Spleen (tissue), 13 donors: ENCODE measurements at regions of chr6 and their contacts with region 1.

Region 1: GRCh38 chr6:106163446-106163965 is 77.4 kb downstream of the PRDM1 start:
- DNase-seq: peak; percentile 84
- H3K4me3 ChIP-seq: peak overlapping the region in 1 of 8 donors; percentile 50
- H3K27ac ChIP-seq: peak overlapping the region; percentile 69 to 96 (median 91)
- H3K4me1 ChIP-seq: peaks cover 15 to 31% (median 28%) of the 10 kb centered on the region in 6 donors
- H3K27me3 ChIP-seq: no peaks in the 10 kb centered on the region
- CTCF ChIP-seq: peak in 4 of 11 experiments; percentile 33 to 46 (median 38)
- POLR2A ChIP-seq: no peak

Region 2: DNA sequence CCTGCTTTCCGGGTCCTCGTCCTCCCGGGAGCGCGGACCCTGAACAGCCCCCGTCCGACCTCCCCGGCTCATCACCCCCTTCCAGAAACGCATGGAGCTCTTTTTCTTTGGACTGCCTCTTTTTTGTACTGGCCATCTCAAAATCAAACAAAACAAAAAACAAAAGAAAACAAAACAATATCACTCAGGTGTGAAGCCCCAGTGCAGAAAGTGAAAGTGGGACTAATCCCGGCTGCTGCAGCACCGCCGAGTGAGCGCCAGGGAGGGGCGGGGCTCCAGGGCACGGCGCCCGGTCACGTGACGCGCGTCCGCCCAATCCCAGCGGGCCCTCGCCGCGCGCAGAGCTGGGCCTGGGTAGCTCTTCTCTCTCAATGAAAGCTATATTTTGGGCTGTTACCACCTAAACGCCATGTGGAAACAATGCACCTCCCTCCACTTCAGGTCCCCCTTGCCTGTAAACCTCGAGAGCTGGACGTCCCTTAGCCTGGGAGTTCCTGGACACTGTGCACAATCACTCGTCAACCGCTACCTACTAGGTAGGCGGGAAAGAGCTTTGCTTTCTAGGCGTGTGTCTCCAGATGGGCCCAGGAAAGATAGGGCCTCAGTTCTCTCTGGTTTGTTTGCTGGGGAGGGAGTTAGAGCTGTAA is 171.1 kb before region 1 on chr6:
- intact Hi-C with region 1: no loop called
- DNase-seq: peak; percentile 96
- H3K4me3 ChIP-seq: peak overlapping the region; percentile 52 to 89 (median 70)
- H3K27ac ChIP-seq: peak overlapping the region; percentile 51 to 87 (median 81)
- H3K4me1 ChIP-seq: peaks cover 12 to 44% (median 30%) of the 10 kb centered on the region in 6 donors
- H3K27me3 ChIP-seq: peaks cover 0 to 74% (median 20%) of the 10 kb centered on the region in 7 donors
- CTCF ChIP-seq: peak in 6 of 11 experiments; percentile 12 to 70 (median 44)
- POLR2A ChIP-seq: no peak

Region 3: DNA sequence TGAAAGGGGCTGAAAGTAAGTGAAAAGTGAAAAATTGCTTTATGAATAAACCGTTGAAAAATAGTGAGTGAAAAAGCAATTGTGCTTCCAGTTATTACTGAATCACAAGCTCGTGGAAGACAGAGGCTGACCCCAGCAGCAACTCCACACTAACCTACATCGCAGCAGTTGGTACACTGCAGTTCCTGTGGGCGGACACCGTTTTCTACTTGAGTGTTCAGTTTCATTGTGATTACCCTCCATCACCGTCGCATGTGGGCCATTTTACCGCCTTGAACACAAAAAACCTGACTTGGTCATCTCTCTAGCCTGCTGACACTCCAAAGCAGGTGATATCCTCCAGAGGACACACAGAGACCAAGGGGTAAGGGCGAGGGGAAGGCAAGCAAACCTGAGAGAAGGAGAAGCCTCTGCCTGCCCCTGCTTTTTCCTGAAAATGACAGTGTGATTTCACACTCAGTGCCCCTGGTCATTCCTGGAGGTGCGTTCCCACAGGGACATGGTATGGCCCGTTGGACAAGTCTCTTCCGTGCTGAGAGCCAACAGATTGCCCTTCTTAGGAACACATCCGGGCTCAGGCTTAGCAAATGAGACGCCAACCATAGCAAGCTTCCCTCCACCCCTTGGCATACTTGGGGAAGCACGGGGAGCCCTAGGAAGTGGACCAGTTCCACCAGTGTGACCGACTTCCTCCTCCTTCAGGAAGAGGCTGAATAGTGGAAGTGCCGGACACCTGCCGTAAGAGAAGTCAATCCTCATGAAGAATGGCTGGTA is 48.8 kb before region 1 on chr6:
- intact Hi-C with region 1: loop called (anchors 10 kb)
- DNase-seq: no peak
- H3K4me3 ChIP-seq: peak overlapping the region in 1 of 8 donors; percentile 18
- H3K27ac ChIP-seq: peak overlapping the region in 4 of 8 donors; percentile 48 to 61 (median 58)
- H3K4me1 ChIP-seq: peaks cover 0 to 70% (median 27%) of the 10 kb centered on the region in 6 donors
- H3K27me3 ChIP-seq: peaks cover 0 to 6% (median 0%) of the 10 kb centered on the region in 7 donors
- CTCF ChIP-seq: no peak
- POLR2A ChIP-seq: no peak

Region 4: GRCh38 chr6:106519460-106520394 is 356.2 kb after region 1 on chr6:
- intact Hi-C with region 1: no loop called
- DNase-seq: peak; percentile 93
- H3K4me3 ChIP-seq: peak overlapping the region in 6 of 8 donors; percentile 10 to 62 (median 24)
- H3K27ac ChIP-seq: peak overlapping the region; percentile 80 to 97 (median 92)
- H3K4me1 ChIP-seq: peaks cover 37 to 100% (median 96%) of the 10 kb centered on the region in 6 donors
- H3K27me3 ChIP-seq: no peaks in the 10 kb centered on the region
- CTCF ChIP-seq: no peak
- POLR2A ChIP-seq: peak; percentile 41 to 83 (median 70)